ENCODE measurements at regions of chr5 and their contacts with region 1.

Region 1: DNA sequence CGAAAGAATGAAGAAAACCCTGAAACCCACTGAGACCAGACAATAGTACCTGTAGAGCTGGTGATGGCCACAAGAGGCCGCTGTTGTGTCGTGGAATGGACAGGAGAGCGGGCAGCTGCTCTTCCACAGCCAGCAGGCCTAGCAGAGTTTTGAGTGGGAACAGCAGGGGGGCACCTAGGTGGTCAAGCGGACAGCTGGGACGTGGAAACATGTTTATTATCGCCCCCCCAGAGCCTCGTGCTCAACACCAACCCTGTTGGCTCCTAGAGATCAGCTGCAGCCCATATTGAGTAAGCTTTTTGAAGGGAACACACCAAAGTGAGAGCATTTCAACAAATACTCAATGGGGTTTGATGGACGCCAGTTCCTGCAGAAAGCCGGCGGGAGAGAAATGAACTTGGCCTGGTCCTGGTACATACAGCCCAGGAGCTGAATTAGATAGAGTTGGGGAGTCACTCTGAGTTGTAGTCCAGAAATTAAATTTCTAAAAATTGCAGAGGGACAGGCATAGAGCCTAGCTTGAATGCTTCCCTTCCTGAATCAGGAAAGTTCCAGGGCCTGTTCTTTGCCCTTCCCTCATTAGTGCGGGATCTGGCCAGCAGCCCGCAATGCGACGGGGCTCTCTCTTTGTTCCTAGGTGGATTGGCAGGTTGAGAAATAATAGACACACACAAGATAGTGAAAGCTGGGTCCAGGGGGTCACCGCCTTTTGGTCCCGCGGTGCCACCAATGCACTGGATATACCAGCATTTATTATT is 33.8 kb downstream of the MFAP3 start:
- DNase-seq: peak; percentile 78
- H3K4me3 ChIP-seq: no peak overlapping the region
- H3K27ac ChIP-seq: no peak overlapping the region
- H3K4me1 ChIP-seq: peaks cover 23% of the 10 kb centered on the region
- H3K27me3 ChIP-seq: no peaks in the 10 kb centered on the region
- CTCF ChIP-seq: peak; percentile 87

Region 2: GRCh38 chr5:154092356-154093141 is 20.0 kb after region 1 on chr5:
- CTCF ChIA-PET with region 1: interaction called, 12 read pairs
- POLR2A ChIA-PET with region 1: no interaction called
- intact Hi-C with region 1: no loop called
- DNase-seq: no peak
- H3K4me3 ChIP-seq: no peak overlapping the region
- H3K27ac ChIP-seq: no peak overlapping the region
- H3K4me1 ChIP-seq: peaks cover 31% of the 10 kb centered on the region
- H3K27me3 ChIP-seq: no peaks in the 10 kb centered on the region
- CTCF ChIP-seq: no peak

Region 3: GRCh38 chr5:154162539-154163151 is 90.1 kb after region 1 on chr5:
- CTCF ChIA-PET with region 1: interaction called, 5 read pairs
- POLR2A ChIA-PET with region 1: no interaction called
- intact Hi-C with region 1: loop called (anchors 5 kb)
- DNase-seq: peak; percentile 42
- H3K4me3 ChIP-seq: no peak overlapping the region
- H3K27ac ChIP-seq: no peak overlapping the region
- H3K4me1 ChIP-seq: peaks cover 46% of the 10 kb centered on the region
- H3K27me3 ChIP-seq: no peaks in the 10 kb centered on the region
- CTCF ChIP-seq: no peak

Region 4: GRCh38 chr5:154179846-154180710 is 107.5 kb after region 1 on chr5:
- CTCF ChIA-PET with region 1: interaction called, 29 read pairs
- POLR2A ChIA-PET with region 1: no interaction called
- intact Hi-C with region 1: loop called (anchors 1 kb)
- DNase-seq: peak; percentile 76
- H3K4me3 ChIP-seq: no peak overlapping the region
- H3K27ac ChIP-seq: no peak overlapping the region
- H3K4me1 ChIP-seq: no peaks in the 10 kb centered on the region
- H3K27me3 ChIP-seq: no peaks in the 10 kb centered on the region
- CTCF ChIP-seq: peak; percentile 76

Region 5: GRCh38 chr5:154196955-154197652 is 124.5 kb after region 1 on chr5:
- CTCF ChIA-PET with region 1: interaction called, 14 read pairs
- POLR2A ChIA-PET with region 1: no interaction called
- intact Hi-C with region 1: no loop called
- DNase-seq: peak; percentile 42
- H3K4me3 ChIP-seq: no peak overlapping the region
- H3K27ac ChIP-seq: no peak overlapping the region
- H3K4me1 ChIP-seq: no peaks in the 10 kb centered on the region
- H3K27me3 ChIP-seq: no peaks in the 10 kb centered on the region
- CTCF ChIP-seq: peak; percentile 44

Region 6: DNA sequence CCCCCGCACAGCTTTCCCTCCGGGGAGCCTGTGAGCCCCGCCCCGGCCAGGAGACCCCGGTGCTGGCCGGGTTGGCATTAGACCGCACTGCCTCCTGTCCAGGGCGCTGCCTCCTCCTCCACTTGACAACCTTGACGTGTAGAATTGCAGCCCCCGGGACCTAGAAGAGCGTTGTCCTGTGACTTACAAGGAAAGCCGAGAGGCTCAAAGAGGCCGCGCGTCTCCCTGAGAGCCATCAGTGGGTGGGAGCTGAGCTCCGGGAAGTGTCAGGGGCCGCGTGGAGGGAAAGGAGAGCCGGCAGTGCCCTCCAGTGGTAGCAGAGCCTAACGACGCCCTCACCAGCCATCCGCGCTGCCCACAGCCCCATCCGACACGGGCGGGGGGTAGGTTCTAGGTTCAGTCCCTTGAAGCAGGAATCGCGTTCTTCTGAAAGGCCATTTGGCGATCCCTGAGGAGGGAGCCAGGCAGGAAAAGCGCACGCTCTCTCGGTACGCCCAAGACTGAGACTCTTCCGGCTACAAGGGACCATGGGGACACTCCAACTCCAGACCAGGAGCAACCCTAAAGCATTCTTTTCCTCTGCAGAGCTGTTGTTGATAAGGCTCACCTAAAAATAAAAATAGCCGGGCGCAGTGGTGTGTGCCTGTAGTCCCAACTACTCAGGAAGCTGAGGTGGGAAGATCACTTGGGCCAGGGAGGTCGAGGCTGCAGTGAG is 332.6 kb after region 1 on chr5:
- CTCF ChIA-PET with region 1: interaction called, 29 read pairs
- POLR2A ChIA-PET with region 1: no interaction called
- intact Hi-C with region 1: loop called (anchors 1 kb)
- DNase-seq: peak; percentile 85
- H3K4me3 ChIP-seq: peak overlapping the region; percentile 32
- H3K27ac ChIP-seq: no peak overlapping the region
- H3K4me1 ChIP-seq: no peaks in the 10 kb centered on the region
- H3K27me3 ChIP-seq: no peaks in the 10 kb centered on the region
- CTCF ChIP-seq: peak; percentile 77

Region 7: GRCh38 chr5:154603978-154604679 is 531.5 kb after region 1 on chr5:
- CTCF ChIA-PET with region 1: no interaction called
- POLR2A ChIA-PET with region 1: no interaction called
- intact Hi-C with region 1: loop called (anchors 10 kb)
- DNase-seq: no peak
- H3K4me3 ChIP-seq: no peak overlapping the region
- H3K27ac ChIP-seq: no peak overlapping the region
- H3K4me1 ChIP-seq: no peaks in the 10 kb centered on the region
- H3K27me3 ChIP-seq: no peaks in the 10 kb centered on the region
- CTCF ChIP-seq: no peak

Measured in A673 (cell line).